Cardiac septum (tissue), 1 donor: ENCODE measurements at regions of chr17 and their contacts with region 1.

Region 1: GRCh38 chr17:82273327-82274133 is at the start of gene CSNK1D:
- DNase-seq: peak; percentile 96
- total RNA-seq, gene CSNK1D: 80.9 TPM

Region 2: DNA sequence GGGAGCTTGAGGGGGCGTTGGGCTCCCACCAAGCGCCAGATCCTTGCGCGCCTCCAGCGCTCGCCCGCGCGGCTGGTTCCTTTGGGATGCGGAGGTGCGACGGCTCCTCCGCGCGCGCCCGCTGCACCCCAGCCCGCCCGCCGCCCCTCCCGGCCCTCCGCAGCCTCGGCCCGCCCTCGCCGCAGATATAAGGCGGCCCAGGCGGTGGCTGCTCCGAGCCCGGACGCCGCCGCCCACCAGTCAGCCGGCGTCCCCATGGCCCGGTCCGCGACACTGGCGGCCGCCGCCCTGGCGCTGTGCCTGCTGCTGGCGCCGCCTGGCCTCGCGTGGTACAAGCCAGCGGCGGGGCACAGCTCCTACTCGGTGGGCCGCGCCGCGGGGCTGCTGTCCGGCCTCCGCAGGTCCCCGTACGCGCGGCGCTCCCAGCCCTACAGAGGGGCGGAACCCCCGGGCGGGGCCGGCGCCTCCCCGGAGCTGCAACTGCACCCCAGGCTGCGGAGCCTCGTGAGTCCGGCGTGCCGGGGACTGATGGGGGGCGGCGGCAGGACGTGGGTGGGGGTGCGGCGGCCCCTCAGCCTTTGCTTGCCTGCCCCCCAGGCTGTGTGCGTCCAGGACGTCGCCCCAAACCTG is 371.4 kb before region 1 on chr17 and contains the start of gene NPB:
- intact Hi-C with region 1: no loop called
- DNase-seq: no peak
- total RNA-seq, gene NPB: 0.51 TPM

Region 3: GRCh38 chr17:82292251-82293154 is 19.0 kb after region 1 on chr17:
- intact Hi-C with region 1: loop called (anchors 2 kb)
- DNase-seq: peak; percentile 97

Region 4: DNA sequence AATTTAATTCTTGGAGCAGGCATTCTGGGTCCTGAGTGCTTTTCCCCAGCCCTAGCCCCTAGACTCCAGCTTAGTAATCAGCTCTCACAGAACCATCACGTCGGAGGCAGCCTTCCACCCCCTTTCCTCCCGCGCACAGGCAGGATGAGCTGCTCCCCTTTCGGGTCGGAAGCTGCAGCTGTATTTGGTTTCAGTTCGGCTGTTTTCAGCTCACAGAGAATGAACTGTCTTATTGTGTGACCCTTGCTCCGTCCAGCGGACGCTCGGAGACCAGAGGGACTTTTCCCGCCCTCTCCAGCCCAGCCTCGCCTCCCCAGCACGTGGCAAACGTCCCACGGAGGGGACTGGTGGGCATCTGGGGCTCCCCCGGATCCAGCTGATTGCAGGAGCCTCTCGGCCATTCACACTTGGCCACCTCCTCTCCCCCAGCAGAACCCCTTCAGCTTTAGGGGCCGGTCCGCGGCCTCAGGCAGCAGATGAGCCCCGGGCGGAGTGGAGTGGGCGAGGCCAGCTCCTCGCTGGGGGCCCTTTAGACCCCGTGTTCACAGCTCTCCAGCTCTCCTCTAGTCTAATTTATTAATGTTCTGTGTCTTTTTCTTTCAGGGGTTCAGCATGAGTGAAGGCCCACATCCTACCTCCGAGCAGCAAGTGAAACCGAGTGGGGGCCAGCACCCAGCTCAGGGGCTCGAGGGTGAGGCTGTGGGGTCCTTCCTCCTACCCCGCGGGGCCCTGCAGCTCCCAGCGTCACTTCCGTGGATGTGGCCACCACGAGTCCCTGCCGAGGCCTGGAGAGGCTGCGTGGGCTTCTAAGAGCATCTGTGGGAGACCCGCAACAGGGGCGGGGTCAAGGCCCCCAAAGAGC is 97.2 kb after region 1 on chr17:
- intact Hi-C with region 1: no loop called
- DNase-seq: no peak